Activated T-helper 2 cell treated with anti-CD3 and anti-CD28 coated beads, Interferon-gamma antibody, Interleukin-2, Interleukin-4, amounts not matched to agents 10 μg/mL and 5 μg/mL and 100 μg/mL, durations not matched to agents 14 hours and 24 hours and 36 hours (primary cell): ENCODE measurements at regions of chr13 and their contacts with region 1.

Region 1: DNA sequence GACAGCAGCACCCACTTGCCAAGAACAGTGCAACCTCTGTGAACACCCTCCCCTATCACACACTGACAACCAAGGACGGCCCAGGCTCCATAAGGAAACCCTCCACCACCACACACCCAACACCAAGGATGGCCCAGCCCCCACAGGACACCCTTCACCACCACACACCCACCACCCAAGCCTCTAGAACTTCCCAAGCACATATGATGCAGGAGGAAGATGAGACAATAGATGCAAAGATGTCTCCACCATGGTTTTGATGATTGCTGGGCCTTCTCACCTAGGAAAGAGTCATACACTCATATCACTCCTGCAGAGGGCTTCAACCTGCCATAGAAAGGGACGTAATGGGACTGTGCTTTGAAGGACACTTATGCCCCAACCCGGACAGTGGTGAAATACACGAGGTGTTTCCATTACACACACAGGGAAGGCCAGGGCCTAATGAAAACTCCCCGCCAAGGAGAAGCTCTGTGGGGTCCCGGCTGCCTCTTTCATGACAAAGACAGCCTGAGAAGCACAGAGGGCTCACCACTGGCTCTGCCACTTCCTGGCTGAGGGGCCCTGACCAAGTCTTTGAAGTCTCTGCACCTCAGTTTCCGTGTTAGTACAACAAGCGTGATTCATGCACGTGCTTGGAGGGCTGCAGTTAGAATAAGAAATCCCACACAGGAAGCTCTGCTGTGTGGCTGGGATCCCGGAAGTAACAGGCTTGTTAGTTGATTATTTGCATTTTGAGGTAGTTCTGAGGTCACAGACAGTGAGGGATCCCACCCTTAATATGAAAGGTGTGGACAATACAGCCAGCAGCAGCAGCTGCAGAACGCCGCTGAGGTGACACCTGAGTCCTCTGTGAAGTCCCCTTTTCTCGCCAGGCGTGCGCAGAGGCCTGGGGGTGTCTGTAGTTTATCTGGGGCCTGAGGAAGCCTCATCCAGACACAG is 61.9 kb upstream of the ATP12A start:
- DNase-seq: peak; percentile 49
- H3K4me3 Mint-ChIP-seq: no peak overlapping the region
- H3K27ac Mint-ChIP-seq: peak overlapping the region; percentile 73
- H3K4me1 Mint-ChIP-seq: peaks cover 32% of the 10 kb centered on the region
- H3K27me3 Mint-ChIP-seq: no peaks in the 10 kb centered on the region

Region 2: DNA sequence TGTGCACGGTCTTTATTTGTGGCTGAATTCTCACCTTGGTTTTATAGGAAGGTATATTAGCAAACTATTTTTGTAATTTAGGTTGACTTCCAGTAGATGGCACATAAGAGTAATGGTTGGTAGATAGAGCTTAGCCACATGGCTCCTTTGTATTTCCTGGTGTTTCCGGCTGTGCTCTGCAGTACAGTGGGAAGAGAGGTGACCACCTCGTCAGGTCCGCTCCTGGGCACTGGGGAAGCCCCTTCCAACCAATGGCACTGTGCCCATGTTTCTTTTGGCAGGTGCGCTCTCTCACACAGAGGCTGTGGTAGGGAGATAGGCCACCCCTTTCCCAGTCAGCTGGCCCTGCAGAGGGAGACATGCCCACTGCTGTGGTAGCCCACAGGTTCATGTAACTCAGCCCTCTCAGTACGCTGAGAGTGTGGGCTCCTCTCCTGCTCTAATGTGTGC is 12.3 kb before region 1 on chr13:
- intact Hi-C with region 1: loop called (anchors 2 kb)
- DNase-seq: no peak
- H3K4me3 Mint-ChIP-seq: no peak overlapping the region
- H3K27ac Mint-ChIP-seq: peak overlapping the region; percentile 49
- H3K4me1 Mint-ChIP-seq: peaks cover 22% of the 10 kb centered on the region
- H3K27me3 Mint-ChIP-seq: no peaks in the 10 kb centered on the region

Region 3: GRCh38 chr13:24654738-24655137 is 36.5 kb after region 1 on chr13:
- intact Hi-C with region 1: no loop called
- DNase-seq: no peak
- H3K4me3 Mint-ChIP-seq: no peak overlapping the region
- H3K27ac Mint-ChIP-seq: no peak overlapping the region
- H3K4me1 Mint-ChIP-seq: peaks cover under 1% of the 10 kb centered on the region
- H3K27me3 Mint-ChIP-seq: peaks cover 21% of the 10 kb centered on the region